ENCODE measurements at regions of chr13 and their contacts with region 1.

Region 1: DNA sequence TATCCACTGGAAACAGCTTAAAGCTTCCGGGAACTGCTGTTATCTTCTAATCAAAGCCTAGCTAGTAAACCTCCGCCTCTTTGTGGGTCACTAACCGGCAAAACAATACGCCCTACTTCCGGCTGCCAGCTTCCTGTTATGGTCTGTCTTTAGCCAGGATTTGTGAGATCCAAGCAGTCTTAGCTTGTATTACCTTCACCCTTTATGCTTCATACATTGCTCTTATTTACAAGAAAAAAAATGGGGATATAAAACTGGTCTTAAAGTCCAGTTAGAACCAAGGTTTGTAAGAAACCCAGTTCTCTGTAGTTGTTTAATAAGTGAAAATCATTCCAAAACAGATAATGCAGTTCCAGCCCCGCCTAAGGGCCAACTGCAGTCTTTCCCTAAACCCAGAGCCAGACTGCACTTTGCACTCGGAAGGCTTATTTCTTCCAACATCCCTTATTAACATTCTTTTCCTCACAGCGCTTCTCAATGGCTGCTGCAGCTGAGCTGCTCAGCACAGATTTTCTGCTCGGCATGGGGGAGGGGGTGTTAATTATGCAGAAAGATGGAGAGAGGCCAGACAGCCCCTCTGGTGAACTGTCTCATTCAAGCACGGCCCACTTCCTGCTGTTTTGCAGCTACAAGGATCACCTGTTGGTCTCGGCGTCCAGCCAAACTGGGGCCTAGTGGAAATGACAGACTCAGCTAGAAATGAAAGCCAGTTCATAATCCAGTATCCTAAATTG is 368.4 kb downstream of the KLF12 start:
- DNase-seq: peak; percentile 75
- ATAC-seq: peak; percentile 92
- H3K4me3 ChIP-seq: peak overlapping the region; percentile 11 to 49 (median 46)
- H3K27ac ChIP-seq: peak overlapping the region; percentile 55
- H3K4me1 ChIP-seq: peaks cover 31% of the 10 kb centered on the region
- H3K27me3 ChIP-seq: no peaks in the 10 kb centered on the region
- CTCF ChIP-seq: no peak
- EP300 ChIP-seq: no peak
- POLR2A ChIP-seq: no peak
- RAD21 ChIP-seq: no peak

Region 2: GRCh38 chr13:73778242-73778864 is 12.5 kb after region 1 on chr13:
- CTCF ChIA-PET with region 1: no interaction called
- POLR2A ChIA-PET with region 1: interaction called, 38 read pairs
- in situ Hi-C with region 1: no loop called
- intact Hi-C with region 1: no loop called
- DNase-seq: peak; percentile 78
- ATAC-seq: peak; percentile 90
- H3K4me3 ChIP-seq: peak overlapping the region in 1 of 3 experiments; percentile 44; a peak in 3 of 6 replicates
- H3K27ac ChIP-seq: peak overlapping the region; percentile 71
- H3K4me1 ChIP-seq: peaks cover 41% of the 10 kb centered on the region
- H3K27me3 ChIP-seq: no peaks in the 10 kb centered on the region
- CTCF ChIP-seq: 0 out of 2 replicates have a peak, but pooled peaks have one; percentile 5
- EP300 ChIP-seq: peak in 1 of 2 experiments; percentile 44; a peak in 2 of 4 replicates
- POLR2A ChIP-seq: no peak
- RAD21 ChIP-seq: no peak